Motor neuron (in vitro differentiated cells): ENCODE measurements at regions of chr17 and their contacts with region 1.

Region 1: GRCh38 chr17:14926526-14927122 is 338.5 kb downstream of the PMP22 start:
- ATAC-seq: peak in 2 of 8 experiments; percentile 40 to 49
- H3K4me3 ChIP-seq: no peak overlapping the region
- H3K27ac ChIP-seq: no peak overlapping the region
- H3K4me1 ChIP-seq: peaks cover 4 to 6% of the 10 kb centered on the region in 2 donors

Region 2: DNA sequence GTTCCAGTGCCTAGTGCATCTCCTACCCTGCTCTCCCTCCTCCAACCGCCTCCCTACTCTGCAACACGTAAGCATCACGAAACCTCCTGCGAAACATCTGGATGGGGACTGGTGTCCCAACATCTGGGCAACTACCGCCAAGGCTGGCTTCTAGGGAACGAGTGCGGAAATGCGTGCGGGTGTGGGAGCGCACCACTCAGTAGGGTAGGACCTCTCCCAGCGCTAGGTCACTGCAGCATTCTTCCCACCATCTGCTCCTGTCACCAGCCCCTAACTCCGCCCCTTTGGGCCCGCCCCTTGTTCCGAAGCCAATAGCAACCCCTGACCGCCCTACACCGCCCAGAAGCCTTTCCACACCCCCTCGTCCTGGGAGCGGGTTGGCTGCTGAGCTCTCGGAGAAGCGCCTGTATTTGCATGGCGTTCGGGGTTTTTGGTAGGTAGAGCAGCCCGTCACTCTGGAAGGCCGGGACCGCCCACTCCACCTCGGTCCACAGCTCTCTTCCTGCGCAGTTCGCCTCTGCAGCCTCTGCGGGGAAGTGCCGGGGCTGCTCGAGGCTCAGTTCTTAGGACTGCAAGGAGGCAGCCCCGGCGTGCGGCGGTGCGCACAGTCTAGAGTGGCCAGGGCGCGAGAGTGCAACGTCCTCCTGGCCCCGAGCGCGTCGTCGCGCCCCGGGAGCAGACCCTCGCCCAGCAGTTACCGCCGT is 625.9 kb before region 1 on chr17 and contains the start of gene HS3ST3B1:
- in situ Hi-C with region 1: loop called in 3 of 9 experiments (anchors 25 kb)
- ATAC-seq: peak; percentile 70 to 92 (median 88)
- H3K4me3 ChIP-seq: peak within 1 kb of the TSS; percentile 48 to 73 (median 59)
- H3K27ac ChIP-seq: peak within 1 kb of the TSS; percentile 12 to 62
- H3K4me1 ChIP-seq: peaks cover 6 to 7% of the 10 kb centered on the region in 2 donors
- total RNA-seq, gene HS3ST3B1: 1.9 to 97.1 (median 6.6) TPM